ENCODE measurements at regions of chr4 and their contacts with region 1.

Region 1: DNA sequence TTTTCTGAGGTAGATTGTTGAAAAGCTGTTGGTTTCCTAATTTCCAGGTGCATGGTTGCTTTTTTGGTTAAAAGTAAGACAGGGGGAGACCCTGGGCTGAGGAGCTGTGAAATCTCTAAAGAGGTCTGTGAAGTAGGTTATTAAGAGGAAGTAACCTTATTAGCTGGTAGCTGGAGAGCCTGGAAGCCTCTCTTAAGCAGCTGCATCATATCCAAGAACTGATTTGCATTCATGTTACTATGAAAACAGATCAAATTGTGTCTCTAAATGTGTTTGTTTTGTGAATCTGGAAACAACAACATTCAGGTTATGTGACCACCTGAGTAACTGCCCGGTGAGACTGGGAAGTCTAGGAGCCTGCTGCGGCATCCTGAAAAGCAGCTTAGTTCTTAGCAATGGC is 54.1 kb downstream of the ARHGAP10 start:
- DNase-seq: no peak
- ATAC-seq: peak; percentile 93
- H3K4me3 ChIP-seq: 0 out of 2 replicates have a peak overlapping the region, but pooled peaks have one; percentile 22
- H3K27ac ChIP-seq: peak overlapping the region; percentile 87
- H3K4me1 ChIP-seq: peaks cover 48% of the 10 kb centered on the region
- H3K27me3 ChIP-seq: no peaks in the 10 kb centered on the region
- CTCF ChIP-seq: no peak
- EP300 ChIP-seq: peak in 1 of 2 experiments; percentile 74; a peak in 1 of 4 replicates
- POLR2A ChIP-seq: no peak
- RAD21 ChIP-seq: no peak

Region 2: GRCh38 chr4:147768113-147768512 is 17.9 kb before region 1 on chr4:
- CTCF ChIA-PET with region 1: interaction called, 4 read pairs
- POLR2A ChIA-PET with region 1: interaction called, 4 read pairs
- RAD21 ChIA-PET with region 1: interaction called, 4 read pairs
- SMC1A ChIA-PET with region 1: interaction called, 10 read pairs
- in situ Hi-C with region 1: no loop called
- intact Hi-C with region 1: no loop called
- DNase-seq: no peak
- ATAC-seq: peak; percentile 48; the same call in 2 of the 3 replicates
- H3K4me3 ChIP-seq: no peak overlapping the region
- H3K27ac ChIP-seq: no peak overlapping the region
- H3K4me1 ChIP-seq: peaks cover 11% of the 10 kb centered on the region
- H3K27me3 ChIP-seq: no peaks in the 10 kb centered on the region
- CTCF ChIP-seq: no peak
- EP300 ChIP-seq: no peak
- POLR2A ChIP-seq: no peak
- RAD21 ChIP-seq: no peak

Region 3: GRCh38 chr4:147773261-147774184 is 12.5 kb before region 1 on chr4:
- CTCF ChIA-PET with region 1: interaction called, 4 read pairs
- POLR2A ChIA-PET with region 1: interaction called, 5 read pairs
- RAD21 ChIA-PET with region 1: interaction called, 6 read pairs
- SMC1A ChIA-PET with region 1: interaction called, 64 read pairs
- in situ Hi-C with region 1: no loop called
- intact Hi-C with region 1: no loop called
- DNase-seq: no peak
- ATAC-seq: peak; percentile 57
- H3K4me3 ChIP-seq: no peak overlapping the region
- H3K27ac ChIP-seq: peak overlapping the region; percentile 50; the same call in 1 of the 2 replicates
- H3K4me1 ChIP-seq: peaks cover 29% of the 10 kb centered on the region
- H3K27me3 ChIP-seq: no peaks in the 10 kb centered on the region
- CTCF ChIP-seq: no peak
- EP300 ChIP-seq: no peak
- POLR2A ChIP-seq: no peak
- RAD21 ChIP-seq: no peak

Region 4: DNA sequence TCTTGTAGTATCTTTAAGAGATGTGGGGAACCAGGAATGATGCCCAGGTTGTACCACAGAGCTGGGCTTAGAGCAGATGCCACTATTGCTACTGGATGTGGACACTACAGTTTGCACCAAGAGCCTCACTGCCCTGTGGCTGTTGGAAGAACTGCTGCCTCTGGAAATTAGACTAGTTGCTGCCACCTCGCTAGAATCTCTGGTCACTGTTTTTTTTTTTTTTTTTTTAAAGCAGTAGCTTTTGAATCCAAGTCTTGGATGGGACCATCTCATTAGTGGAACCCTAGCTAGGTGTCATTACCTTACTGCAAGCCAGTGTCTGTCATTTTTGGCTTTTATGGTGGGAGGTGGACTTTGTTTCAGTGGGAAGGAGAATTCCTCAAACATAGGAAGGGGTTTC is 51.4 kb after region 1 on chr4:
- CTCF ChIA-PET with region 1: interaction called, 22 read pairs
- POLR2A ChIA-PET with region 1: no interaction called
- RAD21 ChIA-PET with region 1: interaction called, 19 read pairs
- SMC1A ChIA-PET with region 1: interaction called, 17 read pairs
- in situ Hi-C with region 1: no loop called
- intact Hi-C with region 1: loop called (anchors 5 kb)
- DNase-seq: no peak
- ATAC-seq: peak; percentile 86
- H3K4me3 ChIP-seq: peak overlapping the region; percentile 46; the same call in 1 of the 2 replicates
- H3K27ac ChIP-seq: peak overlapping the region; percentile 65
- H3K4me1 ChIP-seq: peaks cover 21% of the 10 kb centered on the region; the same call in 1 of the 2 replicates
- H3K27me3 ChIP-seq: no peaks in the 10 kb centered on the region
- CTCF ChIP-seq: peak; percentile 7 to 41 (median 34); a peak in 3 of 6 replicates
- EP300 ChIP-seq: no peak
- POLR2A ChIP-seq: no peak
- RAD21 ChIP-seq: 0 out of 2 replicates have a peak, but pooled peaks have one; percentile 3

Measured in GM12878 (cell line).